Mammary epithelial cell (primary cell): ENCODE measurements at regions of chr4 and their contacts with region 1.

Region 1: DNA sequence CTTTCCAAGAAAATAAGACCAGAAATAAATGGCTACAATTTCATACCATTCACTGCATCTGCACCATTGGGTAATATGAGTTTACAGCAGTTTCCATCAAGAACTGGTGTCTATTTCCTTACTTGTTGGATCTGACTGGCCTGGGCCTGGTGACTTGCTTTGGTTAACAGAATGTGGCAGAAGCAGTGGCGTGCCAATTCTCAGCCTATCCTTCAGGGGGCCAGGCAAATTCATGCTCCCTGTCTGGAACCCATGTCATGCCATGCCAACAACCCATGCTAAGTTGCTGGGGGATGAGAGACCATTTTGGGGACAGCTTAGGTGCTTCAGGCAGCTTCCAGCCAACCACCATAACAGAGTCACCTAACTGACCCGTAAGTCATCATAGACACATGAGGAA is 656.7 kb downstream of the SPOCK3 start:
- DNase-seq: no peak
- H3K4me3 ChIP-seq: no peak overlapping the region
- H3K27ac ChIP-seq: no peak overlapping the region
- H3K4me1 ChIP-seq: no peaks in the 10 kb centered on the region
- H3K27me3 ChIP-seq: no peaks in the 10 kb centered on the region
- CTCF ChIP-seq: no peak

Region 2: DNA sequence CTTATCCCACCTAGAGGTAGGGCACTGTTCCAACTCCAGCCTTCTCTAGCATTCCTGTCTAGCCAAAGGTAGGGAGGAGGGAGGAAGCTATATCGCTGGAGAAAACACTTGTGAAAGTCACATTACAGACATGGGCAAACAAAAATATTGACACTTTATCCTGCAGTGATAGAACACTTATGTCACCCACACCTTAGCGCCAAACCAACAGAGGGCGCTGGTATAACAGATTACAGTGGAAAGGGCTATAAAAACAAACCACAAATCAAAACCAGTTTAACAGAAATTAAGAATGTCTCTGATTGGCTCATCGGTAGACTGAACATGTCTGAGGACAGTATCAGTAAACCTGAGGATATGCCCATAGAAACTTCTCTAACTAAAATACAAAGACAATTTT is 253.3 kb before region 1 on chr4:
- CTCF ChIA-PET with region 1: interaction called, 11 read pairs
- dilution Hi-C with region 1: no loop called
- in situ Hi-C with region 1: no loop called
- intact Hi-C with region 1: no loop called
- DNase-seq: peak; percentile 30
- H3K4me3 ChIP-seq: no peak overlapping the region
- H3K27ac ChIP-seq: no peak overlapping the region
- H3K4me1 ChIP-seq: peaks cover 8% of the 10 kb centered on the region
- H3K27me3 ChIP-seq: no peaks in the 10 kb centered on the region
- CTCF ChIP-seq: peak; percentile 53 to 60